HepG2 (cell line): ENCODE measurements at regions of chr6 and their contacts with region 1.

Region 1: GRCh38 chr6:159761873-159762680 is at the start of gene ACAT2:
- DNase-seq: peak; percentile 97
- ATAC-seq: peak; percentile 94
- H3K4me3 ChIP-seq: peak within 1 kb of the TSS; percentile 83 to 97 (median 88)
- H3K27ac ChIP-seq: peak within 1 kb of the TSS; percentile 97
- H3K4me1 ChIP-seq: peaks cover 80% of the 10 kb centered on the region
- H3K27me3 ChIP-seq: no peaks in the 10 kb centered on the region; a peak in 1 of 5 replicates
- CTCF ChIP-seq: peak; percentile 12; the same call in 1 of the 2 replicates
- EP300 ChIP-seq: peak in 1 of 2 experiments; percentile 31; a peak in 2 of 4 replicates
- POLR2A ChIP-seq: peak; percentile 91 to 95
- RAD21 ChIP-seq: peak; percentile 60
- total RNA-seq, gene ACAT2: 534 and 775 TPM in 2 replicates

Region 2: DNA sequence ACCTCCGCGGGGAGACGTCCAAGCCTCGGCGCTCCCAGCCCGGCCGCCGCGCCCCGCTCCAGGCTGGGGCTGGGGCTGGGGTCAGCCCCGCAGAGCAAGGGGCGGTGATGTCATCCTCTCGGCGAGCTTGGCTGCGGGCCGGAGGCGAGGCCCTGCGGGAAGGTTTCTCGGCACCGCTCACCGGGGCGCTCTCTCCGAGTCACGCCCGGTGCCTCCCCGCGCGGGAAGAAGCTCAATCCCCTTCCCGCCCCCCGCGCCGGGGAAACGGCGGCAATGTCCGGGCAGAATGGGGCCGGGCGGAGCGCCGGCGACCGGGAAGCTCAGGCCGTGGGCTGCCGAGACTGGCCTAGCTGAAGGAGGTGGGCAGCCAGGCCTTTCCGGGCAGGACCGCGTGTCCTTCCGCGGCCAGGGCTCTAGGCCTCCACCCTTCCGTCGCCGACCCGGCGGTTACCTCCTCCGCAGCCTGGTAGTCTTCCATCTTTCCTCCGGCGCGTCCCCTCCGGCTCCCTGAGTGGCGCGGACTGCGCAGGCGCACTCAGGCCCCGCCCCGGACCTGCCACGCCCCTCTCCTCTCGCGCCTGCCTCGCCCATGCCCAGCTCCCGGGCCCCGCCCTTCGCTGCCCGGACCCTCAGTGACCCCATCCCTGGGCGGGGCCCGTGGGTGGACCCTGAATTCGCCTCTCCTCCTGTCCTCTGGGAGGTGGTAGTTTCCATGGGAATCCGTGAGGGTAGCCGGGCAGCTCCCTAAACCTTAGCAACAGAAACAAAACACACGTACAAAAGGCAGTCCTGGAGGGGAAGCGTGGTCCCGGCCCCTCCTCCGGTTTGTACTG is 1117.6 kb before region 1 on chr6 and contains the start of gene DYNLT1:
- CTCF ChIA-PET with region 1: no interaction called
- POLR2A ChIA-PET with region 1: no interaction called
- in situ Hi-C with region 1: no loop called
- intact Hi-C with region 1: loop called (anchors 10 kb)
- DNase-seq: peak; percentile 90
- ATAC-seq: peak; percentile 86
- H3K4me3 ChIP-seq: peak within 1 kb of the TSS; percentile 79 to 96 (median 91)
- H3K27ac ChIP-seq: peak within 1 kb of the TSS; percentile 67
- H3K4me1 ChIP-seq: peaks cover 49% of the 10 kb centered on the region
- H3K27me3 ChIP-seq: peaks cover 2 to 20% of the 10 kb centered on the region in 2 experiments; a peak in 3 of 5 replicates
- CTCF ChIP-seq: peak; percentile 42; the same call in 1 of the 2 replicates
- EP300 ChIP-seq: peak in 1 of 2 experiments; percentile 40; a peak in 1 of 4 replicates
- POLR2A ChIP-seq: peak; percentile 93 to 98
- RAD21 ChIP-seq: peak; percentile 61
- total RNA-seq, gene DYNLT1: 108 and 144 TPM in 2 replicates

Region 3: DNA sequence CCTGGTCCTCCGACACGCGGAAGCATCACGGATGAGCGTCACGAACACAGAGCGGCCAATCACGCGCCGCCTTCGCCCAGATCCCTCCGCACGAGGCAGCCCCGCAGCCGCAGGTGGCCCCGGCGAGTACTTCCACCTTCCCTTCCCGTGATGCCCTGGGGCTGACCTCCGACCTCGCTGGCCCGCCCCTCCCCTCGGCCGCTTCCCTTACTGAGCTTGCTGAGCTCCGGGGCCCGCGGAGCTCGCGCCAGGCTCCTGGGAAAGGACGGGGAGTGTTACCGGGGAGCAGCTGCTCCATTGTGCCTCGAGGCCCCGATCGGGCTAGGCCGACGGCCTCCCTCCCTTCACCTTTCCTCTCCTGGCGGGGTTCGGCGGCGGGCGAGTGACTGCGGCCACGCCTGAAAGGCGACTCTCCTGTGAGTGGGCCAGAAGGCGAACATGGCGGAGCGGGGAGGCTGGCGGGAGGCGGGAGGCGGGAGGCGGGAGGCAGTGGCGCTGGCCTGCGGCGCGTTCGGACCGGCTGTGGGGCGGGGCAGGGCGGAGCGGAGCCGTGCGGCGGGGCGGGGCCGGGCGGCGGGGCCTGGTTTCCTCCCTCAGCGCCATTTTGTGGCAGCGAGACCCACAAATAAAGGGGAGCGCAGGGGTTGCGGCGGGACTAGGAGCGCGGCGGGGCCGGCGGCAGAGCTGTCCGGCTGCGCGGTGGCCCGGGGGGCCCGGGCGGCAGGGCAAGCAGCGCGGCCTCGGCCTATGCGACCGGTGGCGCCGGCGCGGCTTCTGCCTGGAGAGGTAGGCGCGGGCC is 35.0 kb before region 1 on chr6 and contains the start of gene WTAP:
- CTCF ChIA-PET with region 1: no interaction called
- POLR2A ChIA-PET with region 1: interaction called, 175 read pairs
- in situ Hi-C with region 1: loop called (anchors 5 kb)
- intact Hi-C with region 1: loop called (anchors 1 kb)
- DNase-seq: peak; percentile 95
- ATAC-seq: peak; percentile 89
- H3K4me3 ChIP-seq: peak within 1 kb of the TSS; percentile 88 to 99 (median 97)
- H3K27ac ChIP-seq: peak within 1 kb of the TSS; percentile 99
- H3K4me1 ChIP-seq: peaks cover 61% of the 10 kb centered on the region
- H3K27me3 ChIP-seq: no peaks in the 10 kb centered on the region; a peak in 1 of 5 replicates
- CTCF ChIP-seq: peak; percentile 40
- EP300 ChIP-seq: peak; percentile 5 to 64; a peak in 2 of 4 replicates
- POLR2A ChIP-seq: peak; percentile 86 to 97
- RAD21 ChIP-seq: peak; percentile 62
- total RNA-seq, gene WTAP: 167 and 203 TPM in 2 replicates

Region 4: DNA sequence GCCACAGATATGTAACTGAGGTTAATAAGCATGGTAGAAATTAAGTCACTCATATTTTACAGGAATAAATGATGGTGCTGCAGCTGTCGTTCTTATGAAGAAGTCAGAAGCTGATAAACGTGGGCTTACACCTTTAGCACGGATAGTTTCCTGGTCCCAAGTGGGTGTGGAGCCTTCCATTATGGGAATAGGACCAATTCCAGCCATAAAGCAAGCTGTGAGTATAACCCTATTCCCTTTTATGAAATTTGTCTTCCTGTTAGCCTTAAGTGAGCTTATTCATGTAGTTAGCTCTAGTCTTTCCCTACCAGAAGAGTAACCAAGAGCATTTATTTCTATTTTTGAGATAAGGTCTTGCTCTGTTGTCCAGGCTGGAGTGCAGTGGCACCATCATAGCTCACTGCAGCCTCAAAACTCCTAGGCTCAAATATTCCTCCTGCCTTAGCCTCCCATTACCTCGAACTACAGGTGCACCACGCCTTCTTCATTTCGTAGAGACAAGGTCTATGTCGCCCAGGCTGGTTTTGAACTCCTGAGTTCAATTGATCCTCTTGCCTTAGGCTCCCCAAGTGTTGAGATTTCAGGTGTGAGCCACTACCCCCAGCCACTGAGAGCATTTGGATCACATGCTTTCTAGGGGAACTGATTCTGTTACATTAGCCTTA is 15.3 kb after region 1 on chr6:
- CTCF ChIA-PET with region 1: no interaction called
- POLR2A ChIA-PET with region 1: interaction called, 11 read pairs
- in situ Hi-C with region 1: no loop called
- intact Hi-C with region 1: no loop called
- DNase-seq: no peak
- ATAC-seq: no peak; the same call in 2 of the 3 replicates
- H3K4me3 ChIP-seq: no peak overlapping the region
- H3K27ac ChIP-seq: no peak overlapping the region
- H3K4me1 ChIP-seq: peaks cover 10% of the 10 kb centered on the region; the same call in 1 of the 2 replicates
- H3K27me3 ChIP-seq: no peaks in the 10 kb centered on the region
- CTCF ChIP-seq: no peak
- EP300 ChIP-seq: no peak
- POLR2A ChIP-seq: peak; percentile 27 to 52; a peak in 3 of 4 replicates
- RAD21 ChIP-seq: no peak

Region 5: GRCh38 chr6:159806021-159806458 is 44.0 kb after region 1 on chr6:
- CTCF ChIA-PET with region 1: no interaction called
- POLR2A ChIA-PET with region 1: interaction called, 16 read pairs
- in situ Hi-C with region 1: no loop called
- intact Hi-C with region 1: no loop called
- DNase-seq: peak; percentile 75
- ATAC-seq: peak; percentile 72
- H3K4me3 ChIP-seq: 0 out of 6 replicates have a peak overlapping the region, but pooled peaks of 1 of the 3 experiments have one; percentile 17
- H3K27ac ChIP-seq: no peak overlapping the region
- H3K4me1 ChIP-seq: peaks cover 32% of the 10 kb centered on the region
- H3K27me3 ChIP-seq: 0 out of 5 replicates have a peak, but pooled peaks cover 0 to 4% of the 10 kb centered on the region in 2 experiments
- CTCF ChIP-seq: no peak
- EP300 ChIP-seq: peak in 1 of 2 experiments; percentile 58; a peak in 1 of 4 replicates
- POLR2A ChIP-seq: no peak
- RAD21 ChIP-seq: no peak